Naive thymus-derived CD4-positive, alpha-beta T cell (primary cell): ENCODE measurements at regions of chr10 and their contacts with region 1.

Region 1: GRCh38 chr10:22714479-22715289 is at the start of gene PIP4K2A:
- DNase-seq: peak; percentile 64 to 84 (median 77)
- ATAC-seq: peak; percentile 90
- H3K4me3 ChIP-seq: peak within 1 kb of the TSS; percentile 89
- H3K4me3 Mint-ChIP-seq: peak within 1 kb of the TSS; percentile 80 to 97 (median 92)
- H3K27ac ChIP-seq: peak within 1 kb of the TSS; percentile 84
- H3K27ac Mint-ChIP-seq: peak within 1 kb of the TSS; percentile 86 to 93 (median 90)
- H3K4me1 ChIP-seq: peaks cover 12 to 22% of the 10 kb centered on the region in 2 donors
- H3K4me1 Mint-ChIP-seq: peaks cover 25 to 38% (median 35%) of the 10 kb centered on the region in 7 donors
- H3K27me3 ChIP-seq: no peaks in the 10 kb centered on the region
- H3K27me3 Mint-ChIP-seq: peaks cover 0 to 6% (median 0%) of the 10 kb centered on the region in 5 donors
- total RNA-seq, gene PIP4K2A: 110 to 152 (median 140) TPM

Region 2: GRCh38 chr10:21533467-21534279 is 1181.0 kb before region 1 on chr10 and contains the start of gene MLLT10:
- CTCF ChIA-PET with region 1: no interaction called
- POLR2A ChIA-PET with region 1: no interaction called
- intact Hi-C with region 1: loop called in 1 of 2 experiments (anchors 10 kb)
- DNase-seq: peak; percentile 90 to 96 (median 94)
- ATAC-seq: peak; percentile 95
- H3K4me3 ChIP-seq: peak within 1 kb of the TSS; percentile 81
- H3K4me3 Mint-ChIP-seq: peak within 1 kb of the TSS; percentile 90 to 98 (median 97)
- H3K27ac ChIP-seq: peak within 1 kb of the TSS; percentile 83
- H3K27ac Mint-ChIP-seq: peak within 1 kb of the TSS; percentile 91 to 98 (median 97)
- H3K4me1 ChIP-seq: peaks cover 8 to 15% of the 10 kb centered on the region in 2 donors
- H3K4me1 Mint-ChIP-seq: peaks cover 14 to 36% (median 27%) of the 10 kb centered on the region in 7 donors
- H3K27me3 ChIP-seq: no peaks in the 10 kb centered on the region
- H3K27me3 Mint-ChIP-seq: peaks cover 0 to 18% (median 0%) of the 10 kb centered on the region in 5 donors
- total RNA-seq, gene MLLT10: 50.0 to 74.2 (median 67.9) TPM

Region 3: GRCh38 chr10:22316285-22317120 is 398.2 kb before region 1 on chr10 and contains the start of gene COMMD3:
- CTCF ChIA-PET with region 1: no interaction called
- POLR2A ChIA-PET with region 1: interaction called, 3 read pairs
- intact Hi-C with region 1: loop called (anchors 5 to 10 kb)
- DNase-seq: peak; percentile 71 to 85 (median 80)
- ATAC-seq: peak; percentile 84
- H3K4me3 ChIP-seq: peak within 1 kb of the TSS; percentile 73
- H3K4me3 Mint-ChIP-seq: peak within 1 kb of the TSS; percentile 85 to 99 (median 96)
- H3K27ac ChIP-seq: peak within 1 kb of the TSS; percentile 80
- H3K27ac Mint-ChIP-seq: peak within 1 kb of the TSS; percentile 87 to 99 (median 96)
- H3K4me1 ChIP-seq: peaks cover 16 to 25% of the 10 kb centered on the region in 2 donors
- H3K4me1 Mint-ChIP-seq: peaks cover 11 to 53% (median 46%) of the 10 kb centered on the region in 7 donors
- H3K27me3 ChIP-seq: peaks cover 0 to 13% of the 10 kb centered on the region in 2 donors
- H3K27me3 Mint-ChIP-seq: peaks cover 0 to 18% (median 14%) of the 10 kb centered on the region in 5 donors
- total RNA-seq, gene COMMD3: 33.9 to 83.7 (median 51.2) TPM

Region 4: GRCh38 chr10:22615819-22616499 is 98.7 kb before region 1 on chr10:
- CTCF ChIA-PET with region 1: no interaction called
- POLR2A ChIA-PET with region 1: interaction called, 9 read pairs
- intact Hi-C with region 1: loop called (anchors 1 kb)
- DNase-seq: no peak
- ATAC-seq: peak; percentile 45
- H3K4me3 ChIP-seq: peak overlapping the region; percentile 38
- H3K4me3 Mint-ChIP-seq: peak overlapping the region; percentile 5 to 72 (median 26)
- H3K27ac ChIP-seq: peak overlapping the region; percentile 16
- H3K27ac Mint-ChIP-seq: peak overlapping the region; percentile 26 to 94 (median 75)
- H3K4me1 ChIP-seq: peaks cover 77 to 98% of the 10 kb centered on the region in 2 donors
- H3K4me1 Mint-ChIP-seq: peaks cover 75 to 100% (median 96%) of the 10 kb centered on the region in 7 donors
- H3K27me3 ChIP-seq: no peaks in the 10 kb centered on the region
- H3K27me3 Mint-ChIP-seq: no peaks in the 10 kb centered on the region

Region 5: GRCh38 chr10:22655311-22655981 is 59.2 kb before region 1 on chr10:
- CTCF ChIA-PET with region 1: interaction called, 7 read pairs
- POLR2A ChIA-PET with region 1: interaction called, 71 read pairs
- intact Hi-C with region 1: loop called (anchors 1 kb)
- DNase-seq: peak in 7 of 9 donors; percentile 69 to 90 (median 86)
- ATAC-seq: peak; percentile 89
- H3K4me3 ChIP-seq: peak overlapping the region; percentile 23
- H3K4me3 Mint-ChIP-seq: peak overlapping the region; percentile 67 to 87 (median 81)
- H3K27ac ChIP-seq: peak overlapping the region; percentile 54
- H3K27ac Mint-ChIP-seq: peak overlapping the region; percentile 82 to 97 (median 92)
- H3K4me1 ChIP-seq: peaks cover 84 to 88% of the 10 kb centered on the region in 2 donors
- H3K4me1 Mint-ChIP-seq: peaks cover 84 to 100% (median 90%) of the 10 kb centered on the region in 7 donors
- H3K27me3 ChIP-seq: no peaks in the 10 kb centered on the region
- H3K27me3 Mint-ChIP-seq: no peaks in the 10 kb centered on the region

Region 6: GRCh38 chr10:22693371-22693784 is 21.3 kb before region 1 on chr10:
- CTCF ChIA-PET with region 1: interaction called, 3 read pairs
- POLR2A ChIA-PET with region 1: interaction called, 22 read pairs
- intact Hi-C with region 1: loop called in 1 of 2 experiments (anchors 2 kb)
- DNase-seq: no peak
- ATAC-seq: peak; percentile 82
- H3K4me3 ChIP-seq: no peak overlapping the region
- H3K4me3 Mint-ChIP-seq: peak overlapping the region in 8 of 10 donors; percentile 1 to 58 (median 41)
- H3K27ac ChIP-seq: no peak overlapping the region
- H3K27ac Mint-ChIP-seq: peak overlapping the region; percentile 21 to 95 (median 82)
- H3K4me1 ChIP-seq: peaks cover 54 to 86% of the 10 kb centered on the region in 2 donors
- H3K4me1 Mint-ChIP-seq: peaks cover 53 to 97% (median 94%) of the 10 kb centered on the region in 7 donors
- H3K27me3 ChIP-seq: no peaks in the 10 kb centered on the region
- H3K27me3 Mint-ChIP-seq: no peaks in the 10 kb centered on the region

Region 7: DNA sequence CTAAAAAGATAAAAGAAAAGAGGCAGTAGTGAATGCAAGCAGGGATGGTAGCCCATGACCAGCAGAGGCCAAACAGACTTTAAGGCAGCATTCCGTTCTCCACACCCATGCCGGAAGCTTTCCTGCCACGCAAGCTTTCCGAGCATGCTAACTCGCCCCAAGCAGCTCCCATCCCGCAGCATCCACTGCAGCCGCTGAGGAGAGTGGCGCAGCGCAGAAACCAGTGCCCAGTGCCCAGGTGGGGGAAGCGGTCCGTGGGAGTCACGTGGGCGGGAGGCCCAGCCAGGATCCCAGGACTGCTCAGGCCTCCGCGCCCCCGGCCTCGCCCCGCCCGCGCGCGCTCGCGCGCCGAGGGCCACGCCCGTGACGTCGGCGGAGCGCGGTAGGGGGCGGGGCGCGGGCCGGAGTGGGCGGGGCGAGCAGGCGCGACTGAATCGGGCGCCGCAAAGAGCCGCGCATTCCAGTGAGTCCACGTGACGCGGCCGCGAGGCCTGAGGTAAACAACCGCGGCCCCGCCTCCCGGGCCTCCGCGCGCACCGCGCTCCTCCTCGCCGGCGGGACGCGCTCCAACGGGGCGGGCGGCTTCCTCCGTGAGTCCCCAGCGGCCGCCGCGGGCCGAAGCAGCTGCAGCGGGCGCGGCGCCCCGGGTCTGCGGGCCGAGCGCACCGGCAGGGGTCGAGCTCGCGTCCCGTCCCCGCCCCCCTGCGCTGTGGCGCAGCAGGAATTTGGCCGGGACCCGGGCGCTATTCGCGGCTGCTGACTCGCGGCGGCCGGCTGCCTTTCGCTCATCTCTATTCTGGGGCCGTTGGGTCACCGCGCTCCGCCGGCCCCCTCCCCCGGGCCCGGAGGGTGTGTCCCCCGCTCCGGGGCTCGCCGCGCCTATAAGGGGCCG is 724.1 kb after region 1 on chr10 and contains the start of gene OTUD1:
- CTCF ChIA-PET with region 1: no interaction called
- POLR2A ChIA-PET with region 1: no interaction called
- intact Hi-C with region 1: loop called in 1 of 2 experiments (anchors 10 kb)
- DNase-seq: peak; percentile 89 to 99 (median 95)
- ATAC-seq: peak; percentile 96
- H3K4me3 ChIP-seq: peak within 1 kb of the TSS; percentile 96
- H3K4me3 Mint-ChIP-seq: peak within 1 kb of the TSS; percentile 81 to 99 (median 90)
- H3K27ac ChIP-seq: peak within 1 kb of the TSS; percentile 92
- H3K27ac Mint-ChIP-seq: peak within 1 kb of the TSS; percentile 89 to 96 (median 94)
- H3K4me1 ChIP-seq: peaks cover 27 to 29% of the 10 kb centered on the region in 2 donors
- H3K4me1 Mint-ChIP-seq: peaks cover 28 to 44% (median 39%) of the 10 kb centered on the region in 7 donors
- H3K27me3 ChIP-seq: no peaks in the 10 kb centered on the region
- H3K27me3 Mint-ChIP-seq: peaks cover 0 to 8% (median 0%) of the 10 kb centered on the region in 5 donors
- total RNA-seq, gene OTUD1: 20.7 to 118 (median 44.5) TPM